ENCODE measurements at regions of chr4 and their contacts with region 1.

Region 1: GRCh38 chr4:159102622-159103383 is at the start of gene RAPGEF2:
- DNase-seq: peak; percentile 98
- total RNA-seq, gene RAPGEF2: 52.3 TPM

Region 2: DNA sequence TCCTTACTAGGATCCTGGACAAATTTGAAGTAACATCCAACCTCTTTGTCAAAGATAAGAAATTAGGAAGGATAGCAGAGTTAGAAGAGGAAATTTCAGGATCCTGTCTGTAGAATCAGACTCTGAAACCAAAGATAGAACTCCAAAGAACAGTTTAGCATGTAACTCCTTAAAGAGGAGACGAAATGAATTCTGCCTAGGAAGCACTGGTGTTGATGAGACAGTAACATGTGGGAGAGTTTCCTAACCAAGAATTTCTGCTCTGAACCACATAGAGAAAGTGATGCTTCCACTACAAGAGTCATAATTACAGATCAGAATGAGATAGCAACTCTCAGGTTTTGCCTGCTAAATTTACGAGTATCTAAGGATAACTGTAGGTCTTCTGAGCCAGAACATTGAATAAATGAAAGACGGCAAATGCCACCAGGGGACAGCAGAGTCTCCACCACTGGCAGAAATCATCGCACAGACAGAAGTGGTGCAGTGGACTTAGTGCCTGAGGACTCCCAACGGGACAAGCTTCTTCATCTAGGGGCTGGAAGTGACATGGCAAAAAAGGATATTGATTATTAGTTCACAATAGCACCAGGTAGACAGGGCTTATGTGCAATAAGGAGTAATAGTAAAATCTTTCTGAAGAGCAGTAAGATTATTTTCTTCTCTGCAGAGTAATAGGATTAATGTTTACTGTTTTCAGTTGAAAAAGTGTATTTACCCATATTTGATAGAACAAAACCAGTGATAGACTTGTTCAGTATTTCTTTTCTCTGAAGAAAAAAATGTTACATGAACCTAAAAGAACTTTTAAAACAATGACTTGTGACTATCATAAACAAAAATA is 372.9 kb before region 1 on chr4:
- intact Hi-C with region 1: loop called (anchors 5 kb)
- DNase-seq: no peak

Region 3: GRCh38 chr4:158768555-158769174 is 334.1 kb before region 1 on chr4 and contains the start of gene FNIP2:
- intact Hi-C with region 1: loop called (anchors 10 kb)
- DNase-seq: peak; percentile 91
- total RNA-seq, gene FNIP2: 38.5 TPM

Region 4: DNA sequence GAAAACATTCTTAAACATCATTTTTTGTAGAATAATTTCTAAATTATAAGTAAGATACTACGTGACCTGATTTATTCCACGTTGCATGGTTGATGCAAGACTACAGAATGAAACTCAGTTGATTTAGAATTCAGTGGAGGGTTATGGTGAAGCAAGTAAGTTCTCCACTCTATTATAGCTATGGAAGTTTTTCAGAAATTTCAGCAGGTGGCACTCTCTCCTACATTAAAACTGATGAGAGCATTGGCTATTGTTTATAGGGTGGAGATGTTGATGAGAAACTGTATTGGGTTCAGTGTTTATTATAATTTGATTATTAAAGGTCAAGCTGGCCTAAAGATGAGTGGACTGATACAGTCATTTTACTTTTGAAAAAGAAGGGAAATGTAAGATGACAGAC is 246.0 kb before region 1 on chr4:
- intact Hi-C with region 1: loop called (anchors 10 kb)
- DNase-seq: no peak

Region 5: DNA sequence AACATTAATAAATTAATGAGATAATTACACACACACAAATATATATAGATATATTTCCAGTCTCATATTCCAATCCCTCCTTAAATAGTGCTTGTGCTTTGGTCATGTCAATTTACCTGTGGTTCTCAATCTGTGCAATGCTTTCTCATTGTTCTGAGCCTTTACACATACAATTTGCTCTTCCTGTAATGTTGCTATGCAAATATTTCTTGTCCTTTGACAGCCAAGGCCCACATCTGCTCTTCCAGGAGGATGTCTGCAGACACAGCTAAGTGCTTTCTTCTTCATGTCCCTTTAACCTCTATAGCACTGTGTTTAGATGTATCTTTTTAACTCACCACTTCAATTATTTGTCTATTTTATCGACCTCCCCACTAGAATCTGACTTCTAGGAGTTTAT is 67.2 kb before region 1 on chr4:
- intact Hi-C with region 1: no loop called
- DNase-seq: no peak

Region 6: DNA sequence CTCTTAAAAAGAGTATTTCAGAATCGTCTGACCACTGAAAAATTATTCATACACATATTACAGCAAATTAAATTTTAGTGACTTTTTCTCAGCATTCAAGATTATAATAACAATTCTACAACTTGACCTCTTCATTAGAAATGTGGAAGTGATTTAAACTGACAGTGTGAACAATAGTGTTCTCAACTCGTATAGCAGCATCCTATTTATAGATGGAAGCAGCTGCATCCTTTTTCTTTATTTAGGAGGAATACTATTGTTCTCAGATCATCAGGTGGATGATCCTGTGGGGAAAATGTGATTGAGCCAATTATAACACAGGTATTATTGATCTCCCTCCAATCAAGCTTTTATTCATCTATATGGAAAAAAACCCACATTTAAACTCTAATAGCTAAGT is 56.8 kb after region 1 on chr4:
- intact Hi-C with region 1: loop called (anchors 5 kb)
- DNase-seq: no peak

Region 7: GRCh38 chr4:159175085-159175988 is 72.5 kb after region 1 on chr4:
- intact Hi-C with region 1: loop called (anchors 2 kb)
- DNase-seq: no peak

Region 8: DNA sequence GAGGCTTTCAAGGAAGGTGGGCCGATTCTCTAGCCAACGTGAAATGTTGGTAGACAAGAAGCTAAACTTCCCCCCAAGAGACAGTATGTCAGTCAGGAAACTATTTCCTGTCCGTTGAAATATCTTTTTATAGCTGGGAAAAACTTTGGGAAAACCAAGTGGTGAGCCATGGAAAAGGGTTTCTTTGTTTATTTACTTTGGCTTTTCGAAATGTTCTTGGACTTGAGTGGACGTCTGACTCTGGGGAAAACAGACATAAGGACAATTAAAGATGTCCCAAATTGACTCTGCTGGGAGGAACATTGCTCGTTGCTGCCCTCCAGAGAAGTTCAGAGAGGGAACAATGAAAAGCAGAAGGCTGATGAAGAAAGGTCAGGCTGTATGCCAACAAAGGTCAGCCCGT is 295.4 kb after region 1 on chr4:
- intact Hi-C with region 1: loop called (anchors 2 kb)
- DNase-seq: no peak